ENCODE measurements at regions of chr2 and their contacts with region 1.

Region 1: DNA sequence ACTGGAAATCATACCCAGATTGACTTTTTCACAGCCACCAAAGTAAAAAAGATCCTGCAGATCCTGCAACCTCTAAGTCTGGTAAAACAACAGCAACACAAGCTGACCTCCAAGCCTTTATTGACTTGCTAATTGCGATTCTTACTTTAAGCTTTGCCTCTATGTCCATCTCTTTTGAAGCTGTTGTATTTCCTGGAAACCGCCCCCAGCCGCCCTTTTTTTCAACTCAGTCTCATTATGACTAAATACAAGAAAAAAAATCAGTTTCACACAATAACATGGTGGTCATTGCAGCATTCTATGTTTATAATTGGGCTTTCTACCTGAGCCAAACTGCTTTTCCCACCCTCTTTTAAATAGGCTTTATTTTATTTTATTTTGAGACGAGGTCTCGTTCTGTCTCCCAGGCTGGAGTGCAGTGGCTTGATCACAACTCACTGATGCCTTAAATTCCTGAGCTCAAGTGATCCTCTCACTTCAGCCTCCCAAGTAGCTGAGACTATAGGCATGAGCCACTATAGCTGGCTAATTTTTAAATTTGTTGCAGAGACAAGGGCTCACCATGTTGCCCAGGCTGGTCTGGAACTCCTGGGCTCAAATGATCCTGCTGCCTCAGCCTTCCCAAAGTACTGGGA is 76.2 kb downstream of the MOGAT1 start:
- DNase-seq: no peak
- H3K4me3 Mint-ChIP-seq: no peak overlapping the region
- H3K27ac Mint-ChIP-seq: no peak overlapping the region
- H3K4me1 Mint-ChIP-seq: peaks cover 45% of the 10 kb centered on the region
- H3K27me3 Mint-ChIP-seq: peaks cover 2% of the 10 kb centered on the region

Region 2: GRCh38 chr2:222142027-222142426 is 605.6 kb before region 1 on chr2:
- intact Hi-C with region 1: no loop called
- DNase-seq: no peak
- H3K4me3 Mint-ChIP-seq: no peak overlapping the region
- H3K27ac Mint-ChIP-seq: no peak overlapping the region
- H3K4me1 Mint-ChIP-seq: no peaks in the 10 kb centered on the region
- H3K27me3 Mint-ChIP-seq: no peaks in the 10 kb centered on the region

Region 3: GRCh38 chr2:222730366-222730999 is 17.2 kb before region 1 on chr2:
- intact Hi-C with region 1: no loop called
- DNase-seq: no peak
- H3K4me3 Mint-ChIP-seq: no peak overlapping the region
- H3K27ac Mint-ChIP-seq: no peak overlapping the region
- H3K4me1 Mint-ChIP-seq: peaks cover 11% of the 10 kb centered on the region
- H3K27me3 Mint-ChIP-seq: peaks cover 11% of the 10 kb centered on the region

Region 4: GRCh38 chr2:222792001-222792611 is 44.5 kb after region 1 on chr2:
- intact Hi-C with region 1: loop called (anchors 5 kb)
- DNase-seq: no peak
- H3K4me3 Mint-ChIP-seq: no peak overlapping the region
- H3K27ac Mint-ChIP-seq: no peak overlapping the region
- H3K4me1 Mint-ChIP-seq: peaks cover 13% of the 10 kb centered on the region
- H3K27me3 Mint-ChIP-seq: peaks cover 2% of the 10 kb centered on the region

Measured in activated T-helper 2 cell treated with anti-CD3 and anti-CD28 coated beads, Interferon-gamma antibody, Interleukin-2, Interleukin-4, amounts not matched to agents 10 μg/mL and 5 μg/mL and 100 μg/mL, durations not matched to agents 14 hours and 24 hours and 36 hours (primary cell).